ENCODE measurements at regions of chr11 and their contacts with region 1.

Region 1: GRCh38 chr11:103601225-103601846 is 435.1 kb upstream of the DDI1 start:
- DNase-seq: no peak
- H3K4me3 ChIP-seq: no peak overlapping the region
- H3K27me3 ChIP-seq: no peaks in the 10 kb centered on the region
- CTCF ChIP-seq: peak; percentile 93

Region 2: GRCh38 chr11:103202048-103202651 is 399.2 kb before region 1 on chr11:
- CTCF ChIA-PET with region 1: interaction called, 10 read pairs
- POLR2A ChIA-PET with region 1: no interaction called
- DNase-seq: no peak
- H3K4me3 ChIP-seq: no peak overlapping the region
- H3K27me3 ChIP-seq: no peaks in the 10 kb centered on the region
- CTCF ChIP-seq: peak; percentile 67

Region 3: GRCh38 chr11:103326070-103326794 is 275.1 kb before region 1 on chr11:
- CTCF ChIA-PET with region 1: interaction called, 61 read pairs
- POLR2A ChIA-PET with region 1: no interaction called
- DNase-seq: peak; percentile 23
- H3K4me3 ChIP-seq: no peak overlapping the region
- H3K27me3 ChIP-seq: no peaks in the 10 kb centered on the region
- CTCF ChIP-seq: peak; percentile 82

Region 4: DNA sequence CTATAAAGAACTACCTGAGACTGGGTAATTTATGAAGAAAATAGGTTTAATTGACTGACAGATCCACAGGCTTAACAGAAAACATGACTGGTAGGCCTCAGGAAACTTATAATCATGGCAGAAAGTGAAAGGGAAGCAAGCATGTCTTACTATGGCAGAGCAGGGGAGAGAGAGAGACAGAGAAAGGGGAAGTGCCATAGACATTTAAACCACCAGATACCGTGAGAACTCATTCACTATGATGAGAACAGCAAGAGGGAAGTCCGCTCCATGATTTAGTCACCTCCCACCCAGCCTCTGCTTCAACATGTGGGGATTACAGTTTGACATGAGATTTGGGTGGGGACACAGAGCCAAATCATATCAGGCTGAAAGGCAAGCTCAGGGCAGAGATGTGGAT is 108.0 kb after region 1 on chr11:
- CTCF ChIA-PET with region 1: no interaction called
- POLR2A ChIA-PET with region 1: no interaction called
- DNase-seq: no peak
- H3K4me3 ChIP-seq: no peak overlapping the region
- H3K27me3 ChIP-seq: no peaks in the 10 kb centered on the region
- CTCF ChIP-seq: no peak

Region 5: GRCh38 chr11:104001561-104002056 is 400.3 kb after region 1 on chr11:
- CTCF ChIA-PET with region 1: no interaction called
- POLR2A ChIA-PET with region 1: no interaction called
- DNase-seq: no peak
- H3K4me3 ChIP-seq: no peak overlapping the region
- H3K27me3 ChIP-seq: no peaks in the 10 kb centered on the region
- CTCF ChIP-seq: no peak